Mammary epithelial cell (primary cell): ENCODE measurements at regions of chr7 and their contacts with region 1.

Region 1: GRCh38 chr7:113819474-113819873 is 99.3 kb downstream of the PPP1R3A start:
- DNase-seq: no peak
- H3K4me3 ChIP-seq: no peak overlapping the region
- H3K27ac ChIP-seq: no peak overlapping the region
- H3K4me1 ChIP-seq: no peaks in the 10 kb centered on the region
- H3K27me3 ChIP-seq: peaks cover 2% of the 10 kb centered on the region
- CTCF ChIP-seq: no peak

Region 2: DNA sequence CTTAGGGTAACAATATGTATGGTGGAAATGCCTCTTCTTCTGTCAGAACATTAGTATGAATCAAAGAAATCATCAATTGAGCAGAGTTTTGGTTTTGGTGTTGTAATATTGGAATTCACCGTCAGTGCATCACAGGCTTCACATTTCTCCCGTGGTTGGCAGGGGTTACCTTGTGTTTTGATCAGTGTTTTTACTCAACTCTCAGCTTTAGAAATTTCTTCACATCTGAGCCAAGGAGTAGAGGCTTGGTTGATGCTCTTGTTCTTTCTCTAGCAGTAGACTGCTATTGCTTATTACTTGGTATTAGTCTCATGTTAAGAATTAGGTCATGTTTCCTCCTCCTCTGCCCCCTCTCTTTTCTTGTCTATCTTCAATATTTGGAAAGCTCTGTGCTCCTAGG is 512.3 kb before region 1 on chr7:
- CTCF ChIA-PET with region 1: no interaction called
- dilution Hi-C with region 1: no loop called
- in situ Hi-C with region 1: no loop called
- intact Hi-C with region 1: no loop called
- DNase-seq: peak; percentile 40
- H3K4me3 ChIP-seq: no peak overlapping the region
- H3K27ac ChIP-seq: no peak overlapping the region
- H3K4me1 ChIP-seq: no peaks in the 10 kb centered on the region
- H3K27me3 ChIP-seq: no peaks in the 10 kb centered on the region
- CTCF ChIP-seq: no peak

Region 3: DNA sequence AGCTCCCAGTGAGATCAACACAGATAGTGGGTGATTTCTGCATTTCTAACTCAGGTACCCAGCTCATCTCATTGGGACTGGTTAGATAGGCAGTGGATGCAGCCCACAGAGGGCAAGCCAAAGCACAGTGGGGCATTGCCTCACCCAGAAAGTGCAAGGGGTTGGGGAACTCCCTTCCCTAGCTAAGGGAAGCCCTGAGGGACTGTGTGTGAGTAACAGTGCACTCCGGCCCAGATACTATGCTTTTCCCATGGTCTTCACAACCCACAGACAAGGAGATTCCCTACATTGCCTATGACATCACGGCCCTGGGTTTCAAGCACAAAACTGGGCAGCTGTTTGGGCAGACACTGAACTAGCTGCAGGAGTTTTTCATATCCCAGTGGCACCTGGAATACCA is 36.5 kb after region 1 on chr7:
- CTCF ChIA-PET with region 1: no interaction called
- dilution Hi-C with region 1: loop called (anchors 5 kb)
- in situ Hi-C with region 1: no loop called
- intact Hi-C with region 1: no loop called
- DNase-seq: peak; percentile 44
- H3K4me3 ChIP-seq: no peak overlapping the region
- H3K27ac ChIP-seq: no peak overlapping the region
- H3K4me1 ChIP-seq: no peaks in the 10 kb centered on the region
- H3K27me3 ChIP-seq: no peaks in the 10 kb centered on the region
- CTCF ChIP-seq: no peak